ENCODE measurements at regions of chr1 and their contacts with region 1.

Region 1: DNA sequence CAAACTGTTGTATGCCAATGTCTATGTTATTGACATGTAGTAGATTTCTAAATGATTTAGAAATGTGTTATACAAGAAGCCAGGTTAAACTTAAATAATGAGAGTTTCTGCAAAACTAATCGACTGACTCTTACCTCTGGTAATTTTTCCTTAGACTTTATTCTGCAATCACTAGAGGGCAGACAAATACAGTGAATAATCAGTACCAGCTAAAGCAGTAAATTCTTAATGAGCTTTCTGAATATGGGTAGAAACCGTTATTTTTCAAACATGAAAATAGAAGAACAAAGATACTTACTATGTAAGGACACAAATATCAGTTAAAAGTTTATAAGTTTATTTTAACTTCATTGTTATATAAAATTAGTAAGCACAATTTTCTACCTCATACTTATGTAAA is 97.9 kb upstream of the RGS1 start:
- DNase-seq: peak; percentile 46

Region 2: DNA sequence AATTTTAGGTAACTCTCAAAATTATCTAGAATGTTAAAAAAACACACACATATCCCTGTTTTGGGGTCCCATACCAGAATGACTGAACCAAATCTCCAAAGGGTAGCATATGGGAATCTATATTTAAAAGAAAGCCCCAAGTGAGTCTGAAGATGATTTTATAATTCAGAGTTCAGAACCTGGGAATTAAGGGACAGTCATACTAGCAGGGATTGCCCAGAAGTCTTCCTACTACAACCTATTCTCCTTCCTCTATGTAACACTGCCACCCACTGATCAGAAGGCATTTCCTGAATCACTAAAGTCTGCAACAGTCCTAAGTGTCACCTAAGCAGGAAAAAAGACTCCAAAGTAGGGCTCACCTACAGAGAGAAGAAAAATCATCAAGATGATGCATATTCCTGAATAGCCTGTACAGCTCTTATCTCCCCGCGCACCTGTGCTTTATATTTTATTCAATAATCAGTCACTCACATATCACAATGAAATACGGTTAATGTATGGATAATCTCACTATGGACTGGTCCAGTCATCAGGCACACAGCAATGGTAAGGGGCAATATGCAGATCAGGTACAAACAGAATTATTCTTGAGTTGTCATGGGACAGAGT is 102.8 kb after region 1 on chr1:
- in situ Hi-C with region 1: loop called (anchors 10 kb)
- DNase-seq: peak; percentile 53

Region 3: GRCh38 chr1:192739476-192740184 is 262.0 kb after region 1 on chr1:
- in situ Hi-C with region 1: no loop called
- DNase-seq: no peak

Region 4: GRCh38 chr1:193019442-193020026 is 541.9 kb after region 1 on chr1:
- in situ Hi-C with region 1: loop called (anchors 25 kb)
- DNase-seq: peak; percentile 45